ENCODE measurements at regions of chr3 and their contacts with region 1.

Region 1: GRCh38 chr3:148955544-148956346 is 35.6 kb upstream of the GYG1 start:
- DNase-seq: peak; percentile 87
- H3K4me3 ChIP-seq: no peak overlapping the region
- H3K27ac ChIP-seq: no peak overlapping the region
- H3K4me1 ChIP-seq: peaks cover 4% of the 10 kb centered on the region
- H3K27me3 ChIP-seq: no peaks in the 10 kb centered on the region
- CTCF ChIP-seq: peak; percentile 41 to 64
- POLR2A ChIP-seq: no peak

Region 2: DNA sequence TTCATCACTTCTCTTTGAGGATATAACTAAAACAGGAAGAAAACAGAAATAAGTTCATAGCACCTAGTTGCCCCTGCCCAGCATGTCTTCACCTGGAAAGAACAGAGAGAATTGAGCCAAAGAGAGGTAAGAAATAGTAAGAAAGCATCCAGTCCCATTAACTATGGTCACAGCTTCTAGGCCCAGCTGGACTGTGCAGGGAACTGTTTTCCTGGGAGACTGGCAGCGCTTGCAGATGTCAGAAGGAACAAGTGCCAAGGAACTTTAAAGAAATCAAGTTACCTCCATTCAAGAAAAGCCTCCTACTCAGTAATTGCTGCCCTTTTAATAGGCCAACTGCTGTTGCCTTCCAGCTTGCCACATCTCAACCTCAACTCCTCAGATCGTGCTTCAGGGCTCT is 145.9 kb before region 1 on chr3:
- CTCF ChIA-PET with region 1: no interaction called
- POLR2A ChIA-PET with region 1: no interaction called
- dilution Hi-C with region 1: no loop called
- intact Hi-C with region 1: no loop called
- DNase-seq: no peak
- H3K4me3 ChIP-seq: no peak overlapping the region
- H3K27ac ChIP-seq: no peak overlapping the region
- H3K4me1 ChIP-seq: no peaks in the 10 kb centered on the region
- H3K27me3 ChIP-seq: peaks cover 0 to 4% of the 10 kb centered on the region in 2 experiments
- CTCF ChIP-seq: no peak
- POLR2A ChIP-seq: no peak

Region 3: DNA sequence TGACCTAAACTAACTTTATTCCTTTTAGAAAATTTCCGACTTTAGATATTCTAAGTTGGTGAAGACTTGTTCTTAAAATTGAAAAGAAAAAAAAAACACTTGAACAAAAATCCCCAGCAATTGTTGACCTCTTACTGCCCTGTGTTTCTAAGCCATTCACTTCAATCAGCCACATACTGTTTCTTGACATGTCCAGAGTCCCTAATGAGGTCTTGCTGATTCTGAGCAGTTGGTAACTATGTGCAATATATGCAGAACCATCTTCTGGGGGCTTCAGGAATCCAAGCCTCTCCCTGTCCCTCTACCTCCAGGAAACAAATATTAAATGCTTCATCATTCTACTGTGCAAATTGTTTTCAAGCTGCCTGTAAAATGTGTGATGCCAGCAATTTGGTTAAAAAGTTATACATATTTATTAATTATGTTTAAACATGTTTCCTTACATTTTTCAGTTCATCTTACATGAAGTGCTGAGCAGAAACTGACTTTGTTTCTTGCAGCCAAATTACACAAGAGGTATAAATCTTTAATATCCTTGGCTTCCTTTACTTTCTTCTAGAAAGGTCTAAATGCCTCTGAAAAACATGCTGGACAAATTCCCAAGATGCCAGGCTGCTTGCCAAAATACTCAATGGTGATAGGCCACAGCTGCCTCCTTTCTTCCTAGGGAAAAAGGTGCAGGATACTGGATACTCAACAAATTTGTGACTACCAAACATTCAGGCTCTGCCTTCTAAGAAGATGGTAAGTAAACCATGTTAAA is 15.8 kb after region 1 on chr3:
- CTCF ChIA-PET with region 1: interaction called, 19 read pairs
- POLR2A ChIA-PET with region 1: no interaction called
- dilution Hi-C with region 1: no loop called
- intact Hi-C with region 1: no loop called
- DNase-seq: peak; percentile 77
- H3K4me3 ChIP-seq: no peak overlapping the region
- H3K27ac ChIP-seq: no peak overlapping the region
- H3K4me1 ChIP-seq: no peaks in the 10 kb centered on the region
- H3K27me3 ChIP-seq: peaks cover 0 to 3% of the 10 kb centered on the region in 2 experiments
- CTCF ChIP-seq: no peak
- POLR2A ChIP-seq: no peak

Region 4: GRCh38 chr3:149086232-149086988 is 130.7 kb after region 1 on chr3 and contains the start of gene HLTF:
- CTCF ChIA-PET with region 1: interaction called, 12 read pairs
- POLR2A ChIA-PET with region 1: no interaction called
- dilution Hi-C with region 1: no loop called
- intact Hi-C with region 1: loop called (anchors 10 kb)
- DNase-seq: peak; percentile 98
- H3K4me3 ChIP-seq: peak within 1 kb of the TSS; percentile 68 to 81 (median 73)
- H3K27ac ChIP-seq: peak within 1 kb of the TSS; percentile 47
- H3K4me1 ChIP-seq: peaks cover 4% of the 10 kb centered on the region
- H3K27me3 ChIP-seq: no peaks in the 10 kb centered on the region
- CTCF ChIP-seq: no peak
- POLR2A ChIP-seq: peak; percentile 64
- total RNA-seq, gene HLTF: 23.2 and 24.6 TPM in 2 replicates

Region 5: GRCh38 chr3:149267565-149267964 is 311.8 kb after region 1 on chr3:
- CTCF ChIA-PET with region 1: interaction called, 70 read pairs
- POLR2A ChIA-PET with region 1: no interaction called
- dilution Hi-C with region 1: no loop called
- intact Hi-C with region 1: no loop called
- DNase-seq: no peak
- H3K4me3 ChIP-seq: no peak overlapping the region
- H3K27ac ChIP-seq: no peak overlapping the region
- H3K4me1 ChIP-seq: no peaks in the 10 kb centered on the region
- H3K27me3 ChIP-seq: no peaks in the 10 kb centered on the region
- CTCF ChIP-seq: no peak
- POLR2A ChIP-seq: no peak

Region 6: GRCh38 chr3:149330609-149331331 is 375.0 kb after region 1 on chr3:
- CTCF ChIA-PET with region 1: interaction called, 32 read pairs
- POLR2A ChIA-PET with region 1: no interaction called
- dilution Hi-C with region 1: no loop called
- intact Hi-C with region 1: loop called (anchors 2 kb)
- DNase-seq: no peak
- H3K4me3 ChIP-seq: peak overlapping the region in 1 of 3 experiments; percentile 92
- H3K27ac ChIP-seq: peak overlapping the region; percentile 92
- H3K4me1 ChIP-seq: peaks cover 54% of the 10 kb centered on the region
- H3K27me3 ChIP-seq: no peaks in the 10 kb centered on the region
- CTCF ChIP-seq: no peak
- POLR2A ChIP-seq: no peak

Region 7: GRCh38 chr3:149480325-149481017 is 524.7 kb after region 1 on chr3:
- CTCF ChIA-PET with region 1: interaction called, 34 read pairs
- POLR2A ChIA-PET with region 1: no interaction called
- dilution Hi-C with region 1: no loop called
- intact Hi-C with region 1: loop called (anchors 1 kb)
- DNase-seq: peak; percentile 93
- H3K4me3 ChIP-seq: no peak overlapping the region
- H3K27ac ChIP-seq: peak overlapping the region; percentile 64
- H3K4me1 ChIP-seq: peaks cover 12% of the 10 kb centered on the region
- H3K27me3 ChIP-seq: no peaks in the 10 kb centered on the region
- CTCF ChIP-seq: peak; percentile 91 to 93
- POLR2A ChIP-seq: no peak

Measured in endothelial cell of umbilical vein (primary cell).